ENCODE measurements at regions of chr11 and their contacts with region 1.

Region 1: DNA sequence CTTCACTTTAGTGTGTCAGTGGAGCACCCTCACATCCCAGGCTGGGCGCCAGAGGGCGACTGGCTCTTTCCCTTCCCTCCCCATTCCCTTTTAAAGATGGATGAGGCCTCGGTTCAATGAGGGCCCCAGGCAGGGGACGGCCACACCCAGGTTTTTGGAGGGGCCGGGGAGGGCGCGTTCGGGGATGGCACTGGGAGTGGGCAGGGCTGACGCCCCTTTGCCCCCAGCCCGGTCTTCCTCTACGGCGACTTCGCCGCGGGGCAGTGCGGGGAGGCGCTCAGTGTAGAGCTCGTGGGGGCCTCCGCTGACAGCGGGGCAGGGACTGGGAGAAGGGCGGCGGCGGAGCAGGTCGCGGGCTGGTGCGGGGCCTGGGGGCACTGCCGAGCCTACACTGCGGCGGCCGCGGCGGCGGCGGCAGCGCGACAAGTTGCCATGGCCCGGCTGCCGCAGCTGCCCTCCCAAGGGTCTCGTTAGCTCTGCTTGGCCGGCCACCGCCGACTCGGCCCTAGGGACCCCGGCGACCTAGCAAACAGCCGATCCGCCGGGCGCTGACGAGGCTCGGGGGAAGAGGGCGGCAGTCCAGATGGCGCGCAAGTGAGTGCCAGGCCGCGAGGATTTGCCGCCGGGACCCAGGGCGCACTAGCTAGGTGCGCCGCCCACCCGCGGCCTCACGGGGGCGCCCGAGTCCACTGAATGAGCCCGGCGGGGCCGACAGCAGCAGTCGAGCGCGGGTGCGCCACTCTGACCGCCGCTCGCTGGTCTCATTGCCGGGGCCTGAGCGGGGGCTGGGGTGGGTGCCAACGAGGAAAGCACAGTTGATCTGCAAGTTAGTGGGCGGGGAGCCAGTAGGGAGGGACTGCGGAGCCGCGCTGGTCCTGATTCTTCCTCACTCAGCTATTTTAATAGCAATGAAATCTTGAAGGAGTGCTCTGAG is 92.7 kb downstream of the RRM1 start:
- DNase-seq: peak; percentile 97
- ATAC-seq: peak; percentile 95

Region 2: GRCh38 chr11:4493480-4493818 is 306.1 kb after region 1 on chr11:
- intact Hi-C with region 1: loop called (anchors 5 kb)
- DNase-seq: no peak
- ATAC-seq: no peak

Region 3: GRCh38 chr11:5581014-5581413 is 1393.7 kb after region 1 on chr11:
- intact Hi-C with region 1: loop called (anchors 10 kb)
- DNase-seq: no peak
- ATAC-seq: no peak